Dorsolateral prefrontal cortex (tissue), 120 donors: ENCODE measurements at regions of chr11 and their contacts with region 1.

Region 1: GRCh38 chr11:134223836-134224709 is at the starts of genes NCAPD3 and VPS26B:
- DNase-seq: peak; percentile 94 to 97 (median 96)
- H3K4me3 ChIP-seq: peak within 1 kb of the TSS; percentile 61 to 98 (median 88)
- H3K27ac ChIP-seq: peak within 1 kb of the TSS; percentile 76 to 100 (median 97)
- H3K27me3 ChIP-seq: no peaks in the 10 kb centered on the region
- CTCF ChIP-seq: peak in 23 of 56 donors; percentile 2 to 45 (median 18)
- total RNA-seq, gene NCAPD3: 13.4 to 32.0 (median 21.2) TPM
- total RNA-seq, gene VPS26B: 65.2 to 113 (median 90.6) TPM

Region 2: GRCh38 chr11:133934599-133935550 is 289.2 kb before region 1 on chr11:
- intact Hi-C with region 1: loop called (anchors 10 kb)
- DNase-seq: peak; percentile 60 to 94 (median 86)
- H3K4me3 ChIP-seq: peak overlapping the region in 39 of 59 donors; percentile 1 to 51 (median 30)
- H3K27ac ChIP-seq: peak overlapping the region in 32 of 59 donors; percentile 1 to 90 (median 40)
- H3K27me3 ChIP-seq: no peaks in the 10 kb centered on the region
- CTCF ChIP-seq: peak in 18 of 56 donors; percentile 4 to 46 (median 27)

Region 3: DNA sequence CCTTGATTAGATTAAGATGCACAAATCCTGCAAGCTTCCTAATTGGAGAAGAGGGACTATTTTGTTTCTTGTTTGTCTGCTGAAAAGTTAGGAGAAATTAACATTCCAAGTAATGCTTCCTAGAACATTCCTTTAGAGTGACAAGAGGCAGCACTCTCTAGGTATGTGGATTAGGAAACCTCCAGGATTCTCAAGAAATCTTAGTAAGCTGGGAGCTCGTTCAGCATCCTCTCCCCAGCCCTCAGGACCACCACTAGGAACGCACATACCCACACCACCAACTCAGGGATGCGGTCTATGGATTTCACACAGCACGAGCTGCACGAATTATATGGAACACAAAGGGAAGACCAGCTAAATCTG is 53.2 kb before region 1 on chr11:
- intact Hi-C with region 1: no loop called
- DNase-seq: no peak
- H3K4me3 ChIP-seq: no peak overlapping the region
- H3K27ac ChIP-seq: no peak overlapping the region
- H3K27me3 ChIP-seq: no peaks in the 10 kb centered on the region
- CTCF ChIP-seq: no peak

Region 4: GRCh38 chr11:134253188-134253993 is 29.3 kb after region 1 on chr11 and contains the starts of genes ACAD8 and THYN1:
- intact Hi-C with region 1: loop called in 1 of 2 experiments (anchors 2 kb)
- DNase-seq: peak; percentile 95 to 99 (median 98)
- H3K4me3 ChIP-seq: peak within 1 kb of the TSS; percentile 70 to 99 (median 95)
- H3K27ac ChIP-seq: peak within 1 kb of the TSS in 57 of 59 donors; percentile 7 to 92 (median 78)
- H3K27me3 ChIP-seq: no peaks in the 10 kb centered on the region
- CTCF ChIP-seq: peak in 50 of 56 donors; percentile 21 to 66 (median 48)
- total RNA-seq, gene ACAD8: 30.4 to 56.7 (median 43.4) TPM
- total RNA-seq, gene THYN1: 37.8 to 102 (median 75.3) TPM

Region 5: DNA sequence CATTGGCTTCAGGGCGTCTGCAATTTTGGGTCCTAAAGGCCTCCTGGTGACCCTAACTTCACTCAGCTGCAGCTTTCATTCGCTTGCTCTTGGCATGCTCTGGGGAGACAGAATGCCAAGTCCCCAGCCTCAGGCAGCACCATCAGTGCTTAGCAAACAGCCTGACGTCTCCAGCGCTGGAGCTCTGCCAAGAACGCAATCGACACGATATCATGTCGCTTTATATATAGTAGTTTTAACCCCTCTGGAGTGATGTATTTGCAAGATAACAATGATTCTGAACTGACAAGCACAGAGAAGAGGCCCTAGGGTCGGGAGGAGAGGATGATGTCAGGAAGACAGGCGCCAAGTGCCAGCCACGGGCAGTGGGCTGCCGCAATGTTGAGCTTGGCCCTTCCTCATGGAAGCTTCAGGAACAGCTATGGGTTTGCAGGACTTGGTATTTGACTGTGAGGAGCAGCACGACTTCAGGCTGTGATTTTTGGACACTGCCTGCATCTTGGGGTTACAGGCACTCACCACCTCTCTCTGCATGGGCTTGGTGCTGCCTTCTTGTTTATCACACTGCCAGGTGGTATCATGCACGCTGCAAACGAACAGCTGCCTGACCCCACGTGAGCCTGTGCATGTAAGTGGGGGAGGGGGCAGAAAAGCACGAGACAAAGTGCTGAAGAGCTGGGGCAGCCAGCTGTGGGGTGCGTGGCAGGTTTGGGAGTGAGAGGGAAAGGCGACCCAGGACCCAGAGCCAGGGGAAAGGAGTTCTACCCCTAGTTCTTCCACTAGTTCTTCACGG is 161.9 kb after region 1 on chr11:
- intact Hi-C with region 1: no loop called
- DNase-seq: peak in 9 of 10 donors; percentile 58 to 83 (median 72)
- H3K4me3 ChIP-seq: peak overlapping the region in 1 of 59 donors; percentile 8
- H3K27ac ChIP-seq: peak overlapping the region in 55 of 59 donors; percentile 3 to 87 (median 76)
- H3K27me3 ChIP-seq: no peaks in the 10 kb centered on the region
- CTCF ChIP-seq: no peak